ENCODE measurements at regions of chr5 and their contacts with region 1.

Region 1: GRCh38 chr5:56814963-56815658 is at the start of gene MAP3K1:
- DNase-seq: peak; percentile 82 to 91 (median 88)
- H3K4me3 ChIP-seq: peak within 1 kb of the TSS; percentile 78 to 87
- H3K4me3 Mint-ChIP-seq: peak within 1 kb of the TSS; percentile 92 to 97 (median 94)
- H3K27ac ChIP-seq: peak within 1 kb of the TSS; percentile 90
- H3K27ac Mint-ChIP-seq: peak within 1 kb of the TSS; percentile 94 to 99 (median 96)
- H3K4me1 ChIP-seq: peaks cover 37% of the 10 kb centered on the region
- H3K4me1 Mint-ChIP-seq: peaks cover 16 to 47% (median 26%) of the 10 kb centered on the region in 4 donors
- H3K27me3 ChIP-seq: no peaks in the 10 kb centered on the region
- H3K27me3 Mint-ChIP-seq: no peaks in the 10 kb centered on the region
- total RNA-seq, gene MAP3K1: 139 to 146 TPM

Region 2: DNA sequence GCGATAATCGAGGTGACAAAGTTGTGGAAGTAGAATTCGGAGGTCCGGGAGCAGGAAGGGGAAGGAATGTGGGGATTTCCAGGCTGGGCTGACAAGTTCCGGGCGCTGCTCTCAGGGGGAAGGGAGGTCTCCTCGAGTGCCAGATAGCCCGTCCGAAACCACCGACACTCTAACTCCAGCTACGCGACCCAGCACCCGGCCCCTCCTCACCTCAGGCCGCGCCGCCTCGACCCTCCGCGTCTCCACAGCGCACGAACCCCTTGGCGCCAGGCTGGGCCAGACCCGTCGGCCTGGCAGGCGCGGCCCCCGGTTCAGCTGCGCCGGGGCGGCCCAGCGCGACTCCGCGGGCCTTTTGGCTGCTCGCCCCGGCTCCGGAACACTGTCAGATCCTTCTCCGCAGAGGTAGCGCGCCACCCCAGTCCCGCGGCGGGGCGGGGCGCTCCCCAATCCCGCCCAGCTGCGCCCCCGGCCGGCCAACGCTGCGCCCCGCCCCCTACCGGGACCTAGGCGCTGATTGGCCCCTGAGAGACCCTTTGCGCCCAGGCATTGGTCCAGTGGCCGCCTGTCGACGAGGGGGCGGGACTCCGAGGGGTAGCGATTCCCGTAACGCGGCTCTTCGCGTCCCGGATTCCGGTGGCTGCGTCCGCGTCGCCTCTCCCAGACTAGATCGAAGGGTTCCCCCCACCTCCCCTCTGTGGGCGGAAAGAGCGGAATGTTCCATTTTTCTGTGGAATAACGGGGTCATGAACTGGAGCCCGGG is 820.4 kb before region 1 on chr5 and contains the start of gene IL6ST:
- CTCF ChIA-PET with region 1: no interaction called
- POLR2A ChIA-PET with region 1: no interaction called
- intact Hi-C with region 1: loop called (anchors 5 kb)
- DNase-seq: peak; percentile 93 to 95 (median 95)
- H3K4me3 ChIP-seq: peak within 1 kb of the TSS; percentile 91 to 97
- H3K4me3 Mint-ChIP-seq: peak within 1 kb of the TSS; percentile 95 to 100 (median 98)
- H3K27ac ChIP-seq: peak within 1 kb of the TSS; percentile 95
- H3K27ac Mint-ChIP-seq: peak within 1 kb of the TSS; percentile 93 to 100 (median 99)
- H3K4me1 ChIP-seq: peaks cover 42% of the 10 kb centered on the region
- H3K4me1 Mint-ChIP-seq: peaks cover 34 to 76% (median 44%) of the 10 kb centered on the region in 4 donors
- H3K27me3 ChIP-seq: no peaks in the 10 kb centered on the region
- H3K27me3 Mint-ChIP-seq: no peaks in the 10 kb centered on the region
- total RNA-seq, gene IL6ST: 176 to 180 TPM

Region 3: DNA sequence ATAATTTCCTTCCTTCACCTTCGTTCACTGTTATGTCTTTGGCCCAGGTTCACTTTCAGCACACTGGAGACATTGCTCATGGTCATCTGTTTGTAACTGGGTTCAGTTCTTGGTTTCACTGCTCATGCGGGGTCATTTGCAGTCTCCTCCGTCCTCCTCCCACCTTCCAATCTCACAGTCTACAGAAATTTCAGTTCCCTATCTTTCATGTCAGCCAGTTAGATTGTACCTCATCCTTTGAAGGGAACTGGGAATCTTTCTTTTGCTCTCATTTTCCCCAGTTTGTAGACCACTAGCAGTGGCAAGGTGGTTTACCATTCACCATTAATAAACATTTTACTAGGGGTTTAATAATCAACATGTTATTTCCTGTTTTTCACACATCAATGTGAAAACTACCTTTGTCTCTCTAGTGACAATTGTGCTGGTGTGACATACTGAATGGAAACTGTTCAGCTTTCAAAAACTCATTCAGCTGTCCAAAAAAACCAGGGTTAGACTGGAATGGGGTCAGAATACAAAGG is 719.5 kb before region 1 on chr5:
- CTCF ChIA-PET with region 1: no interaction called
- POLR2A ChIA-PET with region 1: no interaction called
- intact Hi-C with region 1: no loop called
- DNase-seq: no peak
- H3K4me3 ChIP-seq: no peak overlapping the region
- H3K4me3 Mint-ChIP-seq: peak overlapping the region in 6 of 8 donors; percentile 1 to 84 (median 12)
- H3K27ac ChIP-seq: no peak overlapping the region
- H3K27ac Mint-ChIP-seq: peak overlapping the region; percentile 23 to 91 (median 73)
- H3K4me1 ChIP-seq: peaks cover 87% of the 10 kb centered on the region
- H3K4me1 Mint-ChIP-seq: peaks cover 55 to 80% (median 66%) of the 10 kb centered on the region in 4 donors
- H3K27me3 ChIP-seq: no peaks in the 10 kb centered on the region
- H3K27me3 Mint-ChIP-seq: no peaks in the 10 kb centered on the region

Region 4: GRCh38 chr5:56346741-56347539 is 468.2 kb before region 1 on chr5:
- CTCF ChIA-PET with region 1: no interaction called
- POLR2A ChIA-PET with region 1: no interaction called
- intact Hi-C with region 1: no loop called
- DNase-seq: no peak
- H3K4me3 ChIP-seq: no peak overlapping the region
- H3K4me3 Mint-ChIP-seq: no peak overlapping the region
- H3K27ac ChIP-seq: no peak overlapping the region
- H3K27ac Mint-ChIP-seq: peak overlapping the region in 1 of 7 donors; percentile 63
- H3K4me1 ChIP-seq: no peaks in the 10 kb centered on the region
- H3K4me1 Mint-ChIP-seq: peaks cover 0 to 8% (median 1%) of the 10 kb centered on the region in 4 donors
- H3K27me3 ChIP-seq: no peaks in the 10 kb centered on the region
- H3K27me3 Mint-ChIP-seq: no peaks in the 10 kb centered on the region

Region 5: DNA sequence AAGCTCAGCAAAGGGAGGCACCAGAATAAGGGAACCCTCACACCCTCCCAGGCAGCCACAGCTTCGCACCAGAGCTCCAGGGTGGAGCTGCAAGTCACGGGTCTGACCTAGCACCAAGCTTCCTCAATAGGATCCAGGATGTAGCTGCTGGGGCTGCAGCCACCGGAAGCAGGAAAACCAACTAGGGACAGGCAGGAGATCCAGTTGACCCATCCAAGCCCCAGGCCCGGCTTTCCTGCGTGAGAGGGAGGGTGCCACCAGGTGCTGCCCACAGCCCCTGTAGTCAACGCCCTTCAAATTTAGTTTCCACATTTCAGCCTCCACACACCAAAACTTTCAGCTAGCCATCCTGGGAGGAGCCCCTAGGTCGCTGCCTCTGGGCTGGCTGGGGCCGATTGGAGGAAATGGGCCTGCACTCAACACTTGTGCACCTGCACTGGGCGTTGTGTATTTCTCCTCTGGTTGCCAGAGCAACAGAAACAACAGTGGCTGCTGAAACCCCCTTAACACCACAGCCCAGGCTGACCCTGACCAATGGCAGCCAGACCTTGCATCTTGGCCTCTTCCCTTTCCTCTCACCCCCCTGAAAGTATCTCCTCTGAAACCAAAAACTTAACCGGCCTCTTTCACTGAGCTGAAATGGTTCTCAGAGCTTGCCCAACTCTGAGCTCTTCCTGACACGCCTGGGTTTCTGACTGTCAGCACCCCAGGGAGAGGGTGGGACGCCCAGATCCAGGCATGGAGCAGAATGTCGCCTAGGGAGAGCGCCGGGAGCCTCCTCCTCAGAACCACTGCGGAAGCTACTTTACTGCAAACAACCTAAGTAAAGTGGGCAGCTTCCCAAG is 226.3 kb before region 1 on chr5:
- CTCF ChIA-PET with region 1: interaction called, 3 read pairs
- POLR2A ChIA-PET with region 1: interaction called, 20 read pairs
- intact Hi-C with region 1: loop called (anchors 5 kb)
- DNase-seq: peak; percentile 73 to 88 (median 82)
- H3K4me3 ChIP-seq: no peak overlapping the region
- H3K4me3 Mint-ChIP-seq: peak overlapping the region; percentile 49 to 81 (median 68)
- H3K27ac ChIP-seq: peak overlapping the region; percentile 72
- H3K27ac Mint-ChIP-seq: peak overlapping the region; percentile 91 to 98 (median 95)
- H3K4me1 ChIP-seq: peaks cover 52% of the 10 kb centered on the region
- H3K4me1 Mint-ChIP-seq: peaks cover 52 to 74% (median 61%) of the 10 kb centered on the region in 4 donors
- H3K27me3 ChIP-seq: no peaks in the 10 kb centered on the region
- H3K27me3 Mint-ChIP-seq: no peaks in the 10 kb centered on the region

Region 6: GRCh38 chr5:56696900-56697299 is 118.2 kb before region 1 on chr5:
- CTCF ChIA-PET with region 1: interaction called, 3 read pairs
- POLR2A ChIA-PET with region 1: interaction called, 39 read pairs
- intact Hi-C with region 1: loop called (anchors 2 kb)
- DNase-seq: peak in 1 of 5 donors; percentile 49
- H3K4me3 ChIP-seq: no peak overlapping the region
- H3K4me3 Mint-ChIP-seq: peak overlapping the region in 4 of 8 donors; percentile 11 to 60 (median 29)
- H3K27ac ChIP-seq: no peak overlapping the region
- H3K27ac Mint-ChIP-seq: peak overlapping the region; percentile 64 to 82 (median 75)
- H3K4me1 ChIP-seq: peaks cover 91% of the 10 kb centered on the region
- H3K4me1 Mint-ChIP-seq: peaks cover 72 to 98% (median 86%) of the 10 kb centered on the region in 4 donors
- H3K27me3 ChIP-seq: no peaks in the 10 kb centered on the region
- H3K27me3 Mint-ChIP-seq: no peaks in the 10 kb centered on the region

Region 7: DNA sequence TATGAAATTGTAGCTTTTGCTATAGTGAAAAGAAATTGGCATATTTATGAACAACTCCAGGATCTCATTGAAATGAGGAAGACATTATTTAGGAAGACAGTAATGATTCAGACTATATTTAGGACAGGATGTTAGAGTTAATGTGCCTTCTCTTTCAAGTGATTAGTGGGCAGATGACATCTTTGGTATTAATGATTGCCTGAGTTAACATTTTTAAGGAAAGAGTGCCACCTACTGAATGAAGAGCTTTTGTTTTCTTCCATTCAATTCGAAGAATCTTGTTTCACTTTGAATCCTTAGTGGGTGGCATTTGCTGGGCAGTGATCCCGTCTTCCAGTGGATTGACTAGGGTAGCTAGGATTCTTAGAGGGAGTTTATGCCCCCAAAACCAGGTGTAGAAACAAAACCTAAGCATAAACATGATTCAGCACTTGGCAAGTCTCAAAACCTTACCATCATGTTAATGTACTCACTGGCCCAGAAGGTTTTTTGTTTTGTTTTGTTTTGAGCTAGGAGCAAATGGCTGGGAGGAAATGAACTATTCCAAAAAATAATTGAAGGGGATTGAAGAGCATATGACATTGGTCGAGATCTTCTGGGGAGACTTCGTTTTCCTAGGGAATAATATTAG is 23.4 kb after region 1 on chr5:
- CTCF ChIA-PET with region 1: interaction called, 12 read pairs
- POLR2A ChIA-PET with region 1: interaction called, 16 read pairs
- intact Hi-C with region 1: loop called (anchors 1 kb)
- DNase-seq: peak in 4 of 5 donors; percentile 64 to 69 (median 64)
- H3K4me3 ChIP-seq: peak overlapping the region in 1 of 2 donors; percentile 9
- H3K4me3 Mint-ChIP-seq: peak overlapping the region in 7 of 8 donors; percentile 43 to 88 (median 70)
- H3K27ac ChIP-seq: peak overlapping the region; percentile 45
- H3K27ac Mint-ChIP-seq: peak overlapping the region; percentile 67 to 92 (median 92)
- H3K4me1 ChIP-seq: peaks cover 99% of the 10 kb centered on the region
- H3K4me1 Mint-ChIP-seq: peaks cover 77 to 95% (median 87%) of the 10 kb centered on the region in 4 donors
- H3K27me3 ChIP-seq: no peaks in the 10 kb centered on the region
- H3K27me3 Mint-ChIP-seq: no peaks in the 10 kb centered on the region

Region 8: GRCh38 chr5:56909294-56910209 is 94.4 kb after region 1 on chr5 and contains the start of gene SETD9:
- CTCF ChIA-PET with region 1: no interaction called
- POLR2A ChIA-PET with region 1: no interaction called
- intact Hi-C with region 1: loop called (anchors 1 kb)
- DNase-seq: peak; percentile 76 to 83 (median 81)
- H3K4me3 ChIP-seq: peak within 1 kb of the TSS; percentile 88 to 97
- H3K4me3 Mint-ChIP-seq: peak within 1 kb of the TSS; percentile 89 to 98 (median 92)
- H3K27ac ChIP-seq: peak within 1 kb of the TSS; percentile 62
- H3K27ac Mint-ChIP-seq: peak within 1 kb of the TSS; percentile 65 to 95 (median 92)
- H3K4me1 ChIP-seq: peaks cover 15% of the 10 kb centered on the region
- H3K4me1 Mint-ChIP-seq: peaks cover 15 to 25% (median 17%) of the 10 kb centered on the region in 4 donors
- H3K27me3 ChIP-seq: no peaks in the 10 kb centered on the region
- H3K27me3 Mint-ChIP-seq: no peaks in the 10 kb centered on the region
- total RNA-seq, gene SETD9: 3.8 to 6.8 TPM

Region 9: GRCh38 chr5:56986626-56986947 is 171.5 kb after region 1 on chr5:
- CTCF ChIA-PET with region 1: no interaction called
- POLR2A ChIA-PET with region 1: no interaction called
- intact Hi-C with region 1: no loop called
- DNase-seq: no peak
- H3K4me3 ChIP-seq: no peak overlapping the region
- H3K4me3 Mint-ChIP-seq: no peak overlapping the region
- H3K27ac ChIP-seq: no peak overlapping the region
- H3K27ac Mint-ChIP-seq: peak overlapping the region in 1 of 7 donors; percentile 21
- H3K4me1 ChIP-seq: peaks cover 13% of the 10 kb centered on the region
- H3K4me1 Mint-ChIP-seq: peaks cover 7 to 18% (median 13%) of the 10 kb centered on the region in 4 donors
- H3K27me3 ChIP-seq: no peaks in the 10 kb centered on the region
- H3K27me3 Mint-ChIP-seq: no peaks in the 10 kb centered on the region

Measured in CD4-positive, alpha-beta memory T cell (primary cell).